Caco-2 (cell line): ENCODE measurements at regions of chr17 and their contacts with region 1.

Region 1: GRCh38 chr17:27654654-27655524 is 23.9 kb downstream of the LGALS9 start:
- DNase-seq: peak; percentile 97 to 98
- H3K4me3 ChIP-seq: no peak overlapping the region
- H3K4me3 Mint-ChIP-seq: no peak overlapping the region
- H3K27ac Mint-ChIP-seq: no peak overlapping the region
- H3K4me1 ChIP-seq: no peaks in the 10 kb centered on the region
- H3K4me1 Mint-ChIP-seq: peaks cover 8% of the 10 kb centered on the region
- H3K27me3 ChIP-seq: no peaks in the 10 kb centered on the region
- H3K27me3 Mint-ChIP-seq: peaks cover 3% of the 10 kb centered on the region
- CTCF ChIP-seq: peak; percentile 99 to 100

Region 2: DNA sequence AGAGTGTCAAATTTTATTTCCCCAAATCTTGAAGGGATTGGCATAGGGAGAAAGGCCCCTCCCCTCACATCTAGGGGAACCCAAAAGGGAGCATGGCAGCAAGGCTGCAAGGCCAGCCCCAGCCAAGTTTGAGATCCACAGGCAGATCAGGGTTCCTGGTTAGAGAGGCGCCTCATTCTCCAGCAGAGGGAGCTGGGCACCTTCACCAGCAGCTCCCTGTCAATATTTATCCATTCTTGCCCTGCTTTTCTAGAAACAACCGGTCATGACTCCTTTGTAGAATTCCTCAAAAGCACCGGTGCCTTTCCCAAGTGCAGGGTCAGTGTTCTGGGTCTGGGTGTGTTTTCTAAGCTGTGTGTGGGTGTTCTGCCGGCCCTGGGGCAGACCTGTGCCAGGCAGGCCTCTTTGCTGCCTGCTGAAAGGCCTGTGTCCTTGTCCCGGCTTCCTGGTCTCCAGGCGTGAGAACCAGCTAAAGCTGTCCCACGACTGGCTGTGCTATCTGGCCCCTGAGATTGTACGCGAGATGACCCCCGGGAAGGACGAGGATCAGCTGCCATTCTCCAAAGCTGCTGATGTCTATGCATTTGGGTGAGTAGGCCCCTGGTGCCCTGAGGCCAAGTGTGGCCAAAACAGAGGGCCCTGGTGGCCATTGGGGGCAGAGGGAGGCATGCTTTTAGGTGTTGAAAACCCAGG is 45.1 kb before region 1 on chr17:
- CTCF ChIA-PET with region 1: interaction called, 34 read pairs
- POLR2A ChIA-PET with region 1: no interaction called
- intact Hi-C with region 1: loop called (anchors 1 kb)
- DNase-seq: peak; percentile 75 to 79
- H3K4me3 ChIP-seq: no peak overlapping the region
- H3K4me3 Mint-ChIP-seq: no peak overlapping the region
- H3K27ac Mint-ChIP-seq: no peak overlapping the region
- H3K4me1 ChIP-seq: no peaks in the 10 kb centered on the region
- H3K4me1 Mint-ChIP-seq: no peaks in the 10 kb centered on the region
- H3K27me3 ChIP-seq: no peaks in the 10 kb centered on the region
- H3K27me3 Mint-ChIP-seq: no peaks in the 10 kb centered on the region
- CTCF ChIP-seq: peak; percentile 84 to 99

Region 3: GRCh38 chr17:27677191-27677590 is 22.3 kb after region 1 on chr17:
- CTCF ChIA-PET with region 1: interaction called, 5 read pairs
- POLR2A ChIA-PET with region 1: no interaction called
- intact Hi-C with region 1: loop called (anchors 2 kb)
- DNase-seq: no peak
- H3K4me3 ChIP-seq: no peak overlapping the region
- H3K4me3 Mint-ChIP-seq: no peak overlapping the region
- H3K27ac Mint-ChIP-seq: no peak overlapping the region
- H3K4me1 ChIP-seq: no peaks in the 10 kb centered on the region
- H3K4me1 Mint-ChIP-seq: no peaks in the 10 kb centered on the region
- H3K27me3 ChIP-seq: no peaks in the 10 kb centered on the region
- H3K27me3 Mint-ChIP-seq: peaks cover 12% of the 10 kb centered on the region
- CTCF ChIP-seq: no peak

Region 4: GRCh38 chr17:27741361-27741861 is 86.5 kb after region 1 on chr17:
- CTCF ChIA-PET with region 1: interaction called, 10 read pairs
- POLR2A ChIA-PET with region 1: no interaction called
- intact Hi-C with region 1: no loop called
- DNase-seq: peak in 1 of 2 experiments; percentile 34
- H3K4me3 ChIP-seq: no peak overlapping the region
- H3K4me3 Mint-ChIP-seq: no peak overlapping the region
- H3K27ac Mint-ChIP-seq: no peak overlapping the region
- H3K4me1 ChIP-seq: no peaks in the 10 kb centered on the region
- H3K4me1 Mint-ChIP-seq: no peaks in the 10 kb centered on the region
- H3K27me3 ChIP-seq: no peaks in the 10 kb centered on the region
- H3K27me3 Mint-ChIP-seq: peaks cover 3% of the 10 kb centered on the region
- CTCF ChIP-seq: no peak

Region 5: GRCh38 chr17:27747462-27748359 is 92.8 kb after region 1 on chr17:
- CTCF ChIA-PET with region 1: interaction called, 167 read pairs
- POLR2A ChIA-PET with region 1: no interaction called
- intact Hi-C with region 1: no loop called
- DNase-seq: peak; percentile 81 to 83
- H3K4me3 ChIP-seq: no peak overlapping the region
- H3K4me3 Mint-ChIP-seq: no peak overlapping the region
- H3K27ac Mint-ChIP-seq: no peak overlapping the region
- H3K4me1 ChIP-seq: no peaks in the 10 kb centered on the region
- H3K4me1 Mint-ChIP-seq: no peaks in the 10 kb centered on the region
- H3K27me3 ChIP-seq: no peaks in the 10 kb centered on the region
- H3K27me3 Mint-ChIP-seq: no peaks in the 10 kb centered on the region
- CTCF ChIP-seq: peak; percentile 88 to 97

Region 6: GRCh38 chr17:27760069-27760885 is 105.4 kb after region 1 on chr17:
- CTCF ChIA-PET with region 1: interaction called, 167 read pairs
- POLR2A ChIA-PET with region 1: no interaction called
- intact Hi-C with region 1: loop called (anchors 1 kb)
- DNase-seq: peak; percentile 85 to 92
- H3K4me3 ChIP-seq: no peak overlapping the region
- H3K4me3 Mint-ChIP-seq: no peak overlapping the region
- H3K27ac Mint-ChIP-seq: no peak overlapping the region
- H3K4me1 ChIP-seq: no peaks in the 10 kb centered on the region
- H3K4me1 Mint-ChIP-seq: no peaks in the 10 kb centered on the region
- H3K27me3 ChIP-seq: no peaks in the 10 kb centered on the region
- H3K27me3 Mint-ChIP-seq: no peaks in the 10 kb centered on the region
- CTCF ChIP-seq: peak; percentile 97 to 100

Region 7: GRCh38 chr17:27868576-27868975 is 213.7 kb after region 1 on chr17:
- CTCF ChIA-PET with region 1: interaction called, 3 read pairs
- POLR2A ChIA-PET with region 1: no interaction called
- intact Hi-C with region 1: loop called (anchors 5 kb)
- DNase-seq: peak; percentile 57 to 66
- H3K4me3 ChIP-seq: no peak overlapping the region
- H3K4me3 Mint-ChIP-seq: no peak overlapping the region
- H3K27ac Mint-ChIP-seq: no peak overlapping the region
- H3K4me1 ChIP-seq: peaks cover 5% of the 10 kb centered on the region; the same call in 1 of the 2 replicates
- H3K4me1 Mint-ChIP-seq: peaks cover 7% of the 10 kb centered on the region
- H3K27me3 ChIP-seq: no peaks in the 10 kb centered on the region
- H3K27me3 Mint-ChIP-seq: no peaks in the 10 kb centered on the region
- CTCF ChIP-seq: peak; percentile 26 to 66